CD8-positive, alpha-beta T cell (primary cell): ENCODE measurements at regions of chr12 and their contacts with region 1.

Region 1: GRCh38 chr12:6752921-6753771 is at the start of gene MLF2:
- DNase-seq: peak; percentile 93 to 98 (median 97)
- ATAC-seq: peak; percentile 87
- H3K4me3 ChIP-seq: peak within 1 kb of the TSS; percentile 92
- H3K4me3 Mint-ChIP-seq: peak within 1 kb of the TSS; percentile 96
- H3K27ac ChIP-seq: peak within 1 kb of the TSS; percentile 83 to 99
- H3K27ac Mint-ChIP-seq: peak within 1 kb of the TSS; percentile 98
- H3K4me1 ChIP-seq: peaks cover 17% of the 10 kb centered on the region
- H3K4me1 Mint-ChIP-seq: peaks cover 21% of the 10 kb centered on the region
- H3K27me3 ChIP-seq: no peaks in the 10 kb centered on the region
- H3K27me3 Mint-ChIP-seq: peaks cover 2% of the 10 kb centered on the region
- CTCF ChIP-seq: peak; percentile 83
- total RNA-seq, gene MLF2: 106 to 111 TPM

Region 2: GRCh38 chr12:6662906-6663742 is 90.0 kb before region 1 on chr12 and contains the start of gene ING4:
- CTCF ChIA-PET with region 1: interaction called, 5 read pairs
- POLR2A ChIA-PET with region 1: no interaction called
- intact Hi-C with region 1: loop called (anchors 1 kb)
- DNase-seq: peak; percentile 91 to 100 (median 95)
- ATAC-seq: peak; percentile 97
- H3K4me3 ChIP-seq: peak within 1 kb of the TSS; percentile 81 to 92
- H3K4me3 Mint-ChIP-seq: peak within 1 kb of the TSS; percentile 96
- H3K27ac ChIP-seq: peak within 1 kb of the TSS; percentile 87 to 91
- H3K27ac Mint-ChIP-seq: peak within 1 kb of the TSS; percentile 97
- H3K4me1 ChIP-seq: peaks cover 20% of the 10 kb centered on the region
- H3K4me1 Mint-ChIP-seq: peaks cover 38% of the 10 kb centered on the region
- H3K27me3 ChIP-seq: no peaks in the 10 kb centered on the region
- H3K27me3 Mint-ChIP-seq: no peaks in the 10 kb centered on the region
- CTCF ChIP-seq: no peak
- total RNA-seq, gene ING4: 14.1 to 15.9 TPM

Region 3: GRCh38 chr12:6735448-6736191 is 17.5 kb before region 1 on chr12:
- CTCF ChIA-PET with region 1: interaction called, 5 read pairs
- POLR2A ChIA-PET with region 1: interaction called, 4 read pairs
- intact Hi-C with region 1: loop called in 1 of 2 experiments (anchors 1 kb)
- DNase-seq: peak in 7 of 9 experiments; percentile 26 to 56 (median 33)
- ATAC-seq: no peak
- H3K4me3 ChIP-seq: no peak overlapping the region
- H3K4me3 Mint-ChIP-seq: no peak overlapping the region
- H3K27ac ChIP-seq: no peak overlapping the region
- H3K27ac Mint-ChIP-seq: peak overlapping the region; percentile 64
- H3K4me1 ChIP-seq: no peaks in the 10 kb centered on the region
- H3K4me1 Mint-ChIP-seq: no peaks in the 10 kb centered on the region
- H3K27me3 ChIP-seq: no peaks in the 10 kb centered on the region
- H3K27me3 Mint-ChIP-seq: no peaks in the 10 kb centered on the region
- CTCF ChIP-seq: no peak

Region 4: GRCh38 chr12:6778574-6779550 is 25.7 kb after region 1 on chr12:
- CTCF ChIA-PET with region 1: interaction called, 403 read pairs
- POLR2A ChIA-PET with region 1: interaction called, 9 read pairs
- intact Hi-C with region 1: loop called (anchors 1 kb)
- DNase-seq: peak; percentile 80 to 92 (median 88)
- ATAC-seq: peak; percentile 72
- H3K4me3 ChIP-seq: peak overlapping the region; percentile 40 to 64
- H3K4me3 Mint-ChIP-seq: peak overlapping the region; percentile 85
- H3K27ac ChIP-seq: peak overlapping the region in 1 of 2 experiments; percentile 8
- H3K27ac Mint-ChIP-seq: peak overlapping the region; percentile 71
- H3K4me1 ChIP-seq: peaks cover 20% of the 10 kb centered on the region
- H3K4me1 Mint-ChIP-seq: peaks cover 27% of the 10 kb centered on the region
- H3K27me3 ChIP-seq: no peaks in the 10 kb centered on the region
- H3K27me3 Mint-ChIP-seq: peaks cover 12% of the 10 kb centered on the region
- CTCF ChIP-seq: peak; percentile 94

Region 5: GRCh38 chr12:6833189-6833890 is 80.2 kb after region 1 on chr12:
- CTCF ChIA-PET with region 1: interaction called, 116 read pairs
- POLR2A ChIA-PET with region 1: interaction called, 24 read pairs
- intact Hi-C with region 1: loop called (anchors 1 kb)
- DNase-seq: no peak
- ATAC-seq: no peak
- H3K4me3 ChIP-seq: no peak overlapping the region
- H3K4me3 Mint-ChIP-seq: no peak overlapping the region
- H3K27ac ChIP-seq: no peak overlapping the region
- H3K27ac Mint-ChIP-seq: no peak overlapping the region
- H3K4me1 ChIP-seq: peaks cover 13% of the 10 kb centered on the region
- H3K4me1 Mint-ChIP-seq: peaks cover 13% of the 10 kb centered on the region
- H3K27me3 ChIP-seq: peaks cover 0 to 11% of the 10 kb centered on the region in 2 experiments
- H3K27me3 Mint-ChIP-seq: peaks cover 2% of the 10 kb centered on the region
- CTCF ChIP-seq: no peak

Region 6: DNA sequence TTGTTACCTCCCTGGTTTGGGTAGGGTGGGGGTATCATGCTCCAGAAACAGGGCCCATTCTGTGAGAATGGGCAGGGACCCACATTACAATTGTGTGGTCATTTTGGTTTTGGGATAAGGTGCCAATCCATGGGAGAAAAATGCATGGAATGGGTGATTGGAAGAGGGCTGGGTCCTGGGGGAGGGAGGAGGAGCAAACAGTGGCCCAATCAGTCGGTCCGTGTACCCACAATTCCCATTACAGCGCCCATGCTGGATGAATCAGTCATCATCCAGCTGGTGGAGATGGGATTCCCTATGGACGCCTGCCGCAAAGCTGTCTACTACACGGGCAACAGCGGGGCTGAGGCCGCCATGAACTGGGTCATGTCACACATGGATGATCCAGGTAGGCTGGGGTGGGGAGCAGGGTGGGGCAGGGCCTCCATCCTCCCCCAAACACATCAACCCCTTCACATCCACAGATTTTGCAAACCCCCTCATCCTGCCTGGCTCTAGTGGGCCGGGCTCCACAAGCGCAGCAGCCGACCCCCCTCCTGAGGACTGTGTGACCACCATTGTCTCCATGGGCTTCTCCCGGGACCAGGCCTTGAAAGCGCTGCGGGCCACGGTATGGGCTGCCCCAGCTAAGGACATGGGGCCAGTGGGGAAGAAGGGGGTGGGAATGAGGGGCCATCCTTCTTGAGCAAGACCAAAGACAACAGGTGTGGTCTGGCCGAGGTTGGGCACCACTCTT is 110.6 kb after region 1 on chr12:
- CTCF ChIA-PET with region 1: no interaction called
- POLR2A ChIA-PET with region 1: no interaction called
- intact Hi-C with region 1: no loop called
- DNase-seq: peak in 1 of 9 experiments; percentile 7
- ATAC-seq: no peak
- H3K4me3 ChIP-seq: no peak overlapping the region
- H3K4me3 Mint-ChIP-seq: no peak overlapping the region
- H3K27ac ChIP-seq: no peak overlapping the region
- H3K27ac Mint-ChIP-seq: no peak overlapping the region
- H3K4me1 ChIP-seq: peaks cover 14% of the 10 kb centered on the region
- H3K4me1 Mint-ChIP-seq: peaks cover 23% of the 10 kb centered on the region
- H3K27me3 ChIP-seq: no peaks in the 10 kb centered on the region
- H3K27me3 Mint-ChIP-seq: no peaks in the 10 kb centered on the region
- CTCF ChIP-seq: no peak

Region 7: DNA sequence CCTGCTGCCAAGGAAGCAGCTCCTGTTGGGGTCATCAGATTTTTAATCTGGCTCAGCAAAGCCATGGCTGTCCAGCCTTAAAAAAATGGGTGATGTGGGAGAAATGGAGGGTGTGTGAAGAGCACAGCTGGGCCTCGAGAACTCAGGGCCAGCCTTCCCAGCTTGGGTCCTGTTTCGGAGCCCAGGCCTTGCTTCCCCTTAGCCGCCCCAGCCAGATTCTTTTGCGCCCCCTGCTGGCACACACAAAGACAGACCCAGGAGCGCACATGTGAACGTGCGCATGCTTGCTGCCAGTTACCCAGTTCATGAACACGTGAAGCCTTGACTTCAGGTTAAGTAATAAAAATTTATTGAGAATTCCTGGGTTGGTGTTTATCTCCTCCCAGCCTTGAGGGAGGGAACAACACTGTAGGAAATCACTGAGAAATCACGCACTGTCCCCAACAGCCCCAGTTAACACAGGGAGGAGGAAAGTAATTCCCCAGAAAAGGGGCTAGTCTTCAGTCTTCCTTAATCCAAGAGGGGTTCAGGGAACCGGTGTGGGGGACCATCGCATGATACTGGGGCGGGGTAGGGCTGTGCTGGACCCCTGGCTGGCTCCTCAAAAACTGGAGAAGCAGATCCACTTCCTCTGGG is 212.0 kb after region 1 on chr12:
- CTCF ChIA-PET with region 1: interaction called, 4 read pairs
- POLR2A ChIA-PET with region 1: no interaction called
- intact Hi-C with region 1: loop called in 1 of 2 experiments (anchors 2 kb)
- DNase-seq: peak; percentile 74 to 93 (median 88)
- ATAC-seq: peak; percentile 45
- H3K4me3 ChIP-seq: no peak overlapping the region
- H3K4me3 Mint-ChIP-seq: no peak overlapping the region
- H3K27ac ChIP-seq: peak overlapping the region; percentile 20 to 74
- H3K27ac Mint-ChIP-seq: peak overlapping the region; percentile 83
- H3K4me1 ChIP-seq: peaks cover 56% of the 10 kb centered on the region
- H3K4me1 Mint-ChIP-seq: peaks cover 54% of the 10 kb centered on the region
- H3K27me3 ChIP-seq: no peaks in the 10 kb centered on the region
- H3K27me3 Mint-ChIP-seq: no peaks in the 10 kb centered on the region
- CTCF ChIP-seq: peak; percentile 78